ENCODE measurements at regions of chr18 and their contacts with region 1.

Region 1: DNA sequence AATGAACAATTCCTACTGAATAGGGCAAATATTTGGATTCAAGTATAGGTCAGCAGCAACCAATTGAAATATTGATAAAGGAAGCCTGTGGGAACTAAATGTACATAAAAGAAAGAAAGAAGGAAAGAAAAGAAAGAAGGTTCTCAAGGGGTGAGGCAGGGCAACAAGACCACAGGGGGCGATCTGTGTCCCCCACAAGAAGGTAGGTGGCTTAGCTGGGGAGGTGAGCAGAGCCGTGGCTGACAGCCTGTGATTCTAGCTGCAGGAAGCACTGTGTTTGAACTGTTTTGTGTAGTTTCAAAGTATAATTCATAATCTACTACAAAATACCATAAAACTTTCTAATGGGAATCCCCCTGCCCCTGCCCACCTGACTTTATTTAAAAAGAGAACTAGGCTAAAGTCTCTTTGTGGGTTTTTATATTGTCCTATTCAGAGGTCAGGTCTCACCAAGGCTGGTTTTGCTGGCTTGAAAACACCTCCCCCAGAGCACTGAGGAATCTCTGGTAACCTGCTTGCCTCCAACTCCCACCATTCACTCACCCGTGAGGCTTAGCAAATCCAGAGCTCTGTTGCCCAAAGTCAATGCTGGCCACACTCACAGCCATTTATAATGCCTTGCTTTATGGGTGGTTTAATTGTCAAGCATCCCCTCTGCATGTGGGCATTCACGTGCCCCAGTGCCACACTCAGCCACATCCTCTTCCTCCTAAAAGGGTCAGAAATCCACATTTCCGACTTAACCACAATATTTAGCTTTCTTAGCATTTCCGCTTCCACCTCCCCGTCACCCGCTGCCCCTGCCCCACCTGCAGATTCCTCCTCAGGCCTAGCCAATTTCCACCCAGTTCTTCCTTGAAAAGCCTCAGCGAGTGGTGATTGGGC is 36.4 kb upstream of the LMAN1 start:
- DNase-seq: no peak
- ATAC-seq: no peak
- H3K4me3 ChIP-seq: no peak overlapping the region
- H3K27ac ChIP-seq: no peak overlapping the region
- H3K4me1 ChIP-seq: no peaks in the 10 kb centered on the region
- H3K27me3 ChIP-seq: no peaks in the 10 kb centered on the region

Region 2: GRCh38 chr18:59249205-59249774 is 146.2 kb before region 1 on chr18:
- intact Hi-C with region 1: loop called in 3 of 4 experiments (anchors 5 to 10 kb)
- DNase-seq: no peak
- ATAC-seq: peak; percentile 57 to 68
- H3K4me3 ChIP-seq: no peak overlapping the region
- H3K27ac ChIP-seq: no peak overlapping the region
- H3K4me1 ChIP-seq: no peaks in the 10 kb centered on the region
- H3K27me3 ChIP-seq: peaks cover 4% of the 10 kb centered on the region

Region 3: GRCh38 chr18:59437851-59438569 is 42.5 kb after region 1 on chr18:
- intact Hi-C with region 1: no loop called
- DNase-seq: no peak
- ATAC-seq: no peak
- H3K4me3 ChIP-seq: no peak overlapping the region
- H3K27ac ChIP-seq: no peak overlapping the region
- H3K4me1 ChIP-seq: no peaks in the 10 kb centered on the region
- H3K27me3 ChIP-seq: no peaks in the 10 kb centered on the region

Region 4: GRCh38 chr18:59459369-59460079 is 64.1 kb after region 1 on chr18:
- intact Hi-C with region 1: no loop called
- DNase-seq: no peak
- ATAC-seq: peak; percentile 44 to 60
- H3K4me3 ChIP-seq: no peak overlapping the region
- H3K27ac ChIP-seq: no peak overlapping the region
- H3K4me1 ChIP-seq: peaks cover 2% of the 10 kb centered on the region
- H3K27me3 ChIP-seq: no peaks in the 10 kb centered on the region

Measured in right cardiac atrium (tissue), 5 donors.